Esophagus squamous epithelium (tissue), 5 donors: ENCODE measurements at regions of chr1 and their contacts with region 1.

Region 1: DNA sequence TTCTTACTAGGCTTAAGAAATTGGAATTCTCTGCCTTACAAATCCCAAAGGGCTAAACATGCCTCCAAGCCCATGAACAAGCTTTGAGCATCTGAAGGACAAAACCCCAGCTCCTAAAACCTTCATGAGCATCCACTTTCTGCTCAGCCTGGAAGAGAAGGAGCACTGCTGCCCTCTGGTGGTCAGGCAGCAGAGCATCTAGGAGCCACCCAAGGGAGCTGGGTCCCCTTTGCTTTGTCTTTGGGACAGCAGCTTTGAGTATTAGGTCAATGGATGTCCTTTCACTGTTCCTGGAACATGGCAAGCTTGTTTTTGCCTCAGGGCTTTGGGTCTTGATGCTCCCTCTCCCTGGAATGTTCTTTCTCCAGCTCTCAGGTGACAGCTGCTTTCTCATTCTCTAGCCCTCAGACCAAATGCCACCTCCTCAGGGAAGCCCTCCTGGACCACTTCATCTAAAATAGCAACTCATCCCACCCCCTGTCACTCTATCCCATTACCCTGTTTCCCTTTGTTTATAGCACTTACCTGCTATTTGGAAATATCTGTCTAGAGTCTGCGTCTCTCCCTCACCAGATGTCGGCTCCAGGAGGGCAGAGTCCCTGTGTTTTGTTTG is 25.7 kb downstream of the RAB7B start:
- DNase-seq: no peak
- H3K4me3 ChIP-seq: no peak overlapping the region
- H3K27ac ChIP-seq: no peak overlapping the region
- H3K4me1 ChIP-seq: peaks cover 7 to 21% (median 14%) of the 10 kb centered on the region in 3 donors
- H3K27me3 ChIP-seq: peaks cover 0 to 7% (median 0%) of the 10 kb centered on the region in 4 donors
- CTCF ChIP-seq: peak; percentile 80 to 96 (median 93)
- POLR2A ChIP-seq: no peak

Region 2: GRCh38 chr1:205791568-205792180 is 185.8 kb before region 1 on chr1:
- intact Hi-C with region 1: loop called (anchors 5 kb)
- DNase-seq: no peak
- H3K4me3 ChIP-seq: no peak overlapping the region
- H3K27ac ChIP-seq: no peak overlapping the region
- H3K4me1 ChIP-seq: no peaks in the 10 kb centered on the region
- H3K27me3 ChIP-seq: no peaks in the 10 kb centered on the region
- CTCF ChIP-seq: peak; percentile 40 to 81 (median 68)
- POLR2A ChIP-seq: no peak